ENCODE measurements at regions of chr10 and their contacts with region 1.

Region 1: GRCh38 chr10:7484456-7485243 is 73.8 kb upstream of the SFMBT2 start:
- DNase-seq: peak; percentile 72
- H3K4me3 Mint-ChIP-seq: peak overlapping the region; percentile 51
- H3K27ac Mint-ChIP-seq: peak overlapping the region; percentile 93
- H3K4me1 Mint-ChIP-seq: peaks cover 88% of the 10 kb centered on the region
- H3K27me3 Mint-ChIP-seq: peaks cover 2% of the 10 kb centered on the region

Region 2: GRCh38 chr10:6929148-6929830 is 555.4 kb before region 1 on chr10:
- intact Hi-C with region 1: loop called (anchors 2 kb)
- DNase-seq: no peak
- H3K4me3 Mint-ChIP-seq: peak overlapping the region; percentile 19
- H3K27ac Mint-ChIP-seq: no peak overlapping the region
- H3K4me1 Mint-ChIP-seq: peaks cover 54% of the 10 kb centered on the region
- H3K27me3 Mint-ChIP-seq: peaks cover 6% of the 10 kb centered on the region

Region 3: DNA sequence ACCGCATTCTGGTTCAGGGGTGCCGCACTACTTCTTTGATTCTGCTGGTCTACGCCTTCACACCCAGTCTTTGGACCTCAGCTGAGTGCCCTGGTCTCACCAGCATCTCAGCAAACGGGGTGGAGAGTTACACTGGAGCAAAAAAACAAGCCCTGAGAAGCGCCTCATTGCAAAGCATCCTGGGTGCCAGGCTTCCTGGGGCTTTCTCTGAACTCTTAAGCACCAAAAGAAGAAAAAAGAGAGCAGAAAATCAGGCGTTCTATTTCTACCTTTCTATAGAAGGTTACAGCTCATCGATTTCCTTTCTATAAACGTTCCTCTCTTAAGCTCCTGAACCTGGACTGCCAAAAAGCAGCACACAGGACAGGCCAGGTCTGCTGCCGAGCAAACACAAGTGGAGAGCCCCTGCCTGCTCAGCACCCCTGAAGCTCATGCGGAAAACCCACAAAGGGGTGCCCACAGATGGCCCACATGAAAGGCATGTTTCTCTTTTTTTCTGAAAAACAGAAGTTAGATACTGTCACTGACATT is 291.8 kb before region 1 on chr10:
- intact Hi-C with region 1: loop called (anchors 5 kb)
- DNase-seq: peak; percentile 68
- H3K4me3 Mint-ChIP-seq: peak overlapping the region; percentile 76
- H3K27ac Mint-ChIP-seq: peak overlapping the region; percentile 97
- H3K4me1 Mint-ChIP-seq: peaks cover 73% of the 10 kb centered on the region
- H3K27me3 Mint-ChIP-seq: peaks cover 1% of the 10 kb centered on the region

Region 4: GRCh38 chr10:7260412-7260900 is 224.2 kb before region 1 on chr10:
- intact Hi-C with region 1: loop called (anchors 10 kb)
- DNase-seq: no peak
- H3K4me3 Mint-ChIP-seq: peak overlapping the region; percentile 49
- H3K27ac Mint-ChIP-seq: peak overlapping the region; percentile 75
- H3K4me1 Mint-ChIP-seq: peaks cover 59% of the 10 kb centered on the region
- H3K27me3 Mint-ChIP-seq: no peaks in the 10 kb centered on the region

Region 5: GRCh38 chr10:7471720-7472367 is 12.8 kb before region 1 on chr10:
- intact Hi-C with region 1: loop called (anchors 1 kb)
- DNase-seq: no peak
- H3K4me3 Mint-ChIP-seq: peak overlapping the region; percentile 63
- H3K27ac Mint-ChIP-seq: no peak overlapping the region
- H3K4me1 Mint-ChIP-seq: peaks cover 33% of the 10 kb centered on the region
- H3K27me3 Mint-ChIP-seq: no peaks in the 10 kb centered on the region

Region 6: GRCh38 chr10:7507887-7508726 is 23.5 kb after region 1 on chr10:
- intact Hi-C with region 1: loop called (anchors 2 kb)
- DNase-seq: peak; percentile 68
- H3K4me3 Mint-ChIP-seq: peak overlapping the region; percentile 13
- H3K27ac Mint-ChIP-seq: peak overlapping the region; percentile 94
- H3K4me1 Mint-ChIP-seq: peaks cover 69% of the 10 kb centered on the region
- H3K27me3 Mint-ChIP-seq: peaks cover 5% of the 10 kb centered on the region

Measured in activated T-helper 1 cell treated with anti-CD3 and anti-CD28 coated beads, Interleukin-12 subunit alpha, Interleukin-12 subunit beta, Interleukin-2, Interleukin-4 antibody, amounts not matched to agents 30 ng/mL and 10 ng/mL and 1 ng/mL, durations not matched to agents 14 hours and 24 hours and 36 hours (primary cell).